PC-9 (cell line): ENCODE measurements at regions of chr9 and their contacts with region 1.

Region 1: DNA sequence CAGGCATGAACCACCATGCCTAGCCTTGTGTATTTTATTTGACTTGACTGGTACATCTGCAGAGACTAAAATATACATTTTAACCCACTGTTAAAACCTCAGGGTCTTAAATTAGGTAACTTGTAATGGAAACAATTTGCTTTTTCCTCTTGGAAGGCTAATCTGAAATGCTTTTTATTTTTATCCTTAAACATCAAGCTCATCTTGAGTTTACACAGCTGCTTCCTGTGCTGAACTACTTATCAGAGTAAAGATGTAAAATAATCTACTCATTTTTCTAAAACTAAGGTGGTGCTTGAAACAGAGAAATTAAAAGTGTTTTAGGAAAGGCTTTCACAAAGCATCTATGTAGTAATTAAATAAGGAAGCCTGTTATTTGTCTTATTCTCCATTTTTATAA is 144.1 kb downstream of the ENTREP1 start:
- DNase-seq: no peak
- H3K4me3 ChIP-seq: no peak overlapping the region
- H3K27ac ChIP-seq: no peak overlapping the region
- H3K4me1 ChIP-seq: no peaks in the 10 kb centered on the region; the same call in 1 of the 2 replicates
- H3K27me3 ChIP-seq: no peaks in the 10 kb centered on the region
- CTCF ChIP-seq: no peak

Region 2: DNA sequence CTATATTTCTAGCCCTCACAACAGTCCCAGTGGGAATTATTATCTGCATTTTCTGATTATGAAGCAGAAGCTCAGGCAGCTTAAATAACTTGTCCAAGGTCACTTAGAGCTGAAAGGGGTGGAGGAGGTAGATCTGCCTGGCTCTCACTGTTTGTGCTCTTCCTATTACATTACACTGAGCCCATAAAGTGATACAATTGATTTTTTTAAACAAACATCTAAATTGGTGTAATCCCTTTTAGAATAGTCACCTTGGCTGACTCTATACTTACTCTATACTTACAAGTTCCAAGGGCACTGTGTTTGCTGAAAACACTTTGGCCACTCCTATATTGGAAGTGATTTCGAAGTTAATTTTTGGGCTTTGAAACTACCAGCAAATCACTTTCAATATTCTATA is 58.3 kb after region 1 on chr9:
- CTCF ChIA-PET with region 1: no interaction called
- POLR2A ChIA-PET with region 1: no interaction called
- intact Hi-C with region 1: no loop called
- DNase-seq: no peak
- H3K4me3 ChIP-seq: no peak overlapping the region
- H3K27ac ChIP-seq: no peak overlapping the region
- H3K4me1 ChIP-seq: no peaks in the 10 kb centered on the region
- H3K27me3 ChIP-seq: no peaks in the 10 kb centered on the region
- CTCF ChIP-seq: no peak

Region 3: DNA sequence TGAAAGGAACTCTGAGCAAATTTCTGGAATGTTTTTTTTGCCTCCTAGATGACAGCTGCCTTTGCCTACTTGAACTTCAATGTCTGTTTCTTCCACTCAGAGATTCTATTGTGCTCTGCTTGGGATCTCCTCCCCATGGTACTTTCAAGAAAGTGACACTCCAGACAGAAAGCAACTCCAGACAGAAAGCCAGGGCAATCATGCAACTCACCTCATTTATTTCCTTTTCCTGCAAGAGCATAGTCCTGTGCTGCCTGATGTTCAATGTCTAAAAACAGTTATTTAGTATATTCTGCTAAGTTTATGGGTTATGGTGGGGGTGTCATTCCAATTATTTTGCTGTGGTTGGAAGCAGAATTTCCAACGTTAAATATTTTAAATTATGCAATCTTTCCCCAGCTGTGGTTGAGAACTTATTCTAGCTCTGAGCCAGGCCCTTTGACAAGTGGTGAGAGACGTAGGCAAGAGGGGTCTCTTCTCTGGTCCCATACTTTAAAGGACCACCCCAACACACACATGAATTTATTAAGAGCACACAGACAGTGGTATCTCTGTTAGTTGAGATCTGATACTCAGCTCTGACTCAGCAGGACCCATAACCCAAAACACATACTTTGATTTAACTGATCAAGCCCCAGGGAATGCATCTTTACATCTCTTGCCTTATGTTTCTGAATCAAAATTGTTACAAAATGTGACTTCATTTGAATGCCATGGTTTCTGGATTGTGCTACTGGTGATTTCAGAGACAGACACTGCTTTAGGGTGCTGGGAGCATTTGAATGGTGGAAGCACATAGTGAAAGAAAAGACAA is 535.0 kb after region 1 on chr9:
- CTCF ChIA-PET with region 1: no interaction called
- POLR2A ChIA-PET with region 1: interaction called, 15 read pairs
- intact Hi-C with region 1: no loop called
- DNase-seq: no peak
- H3K4me3 ChIP-seq: no peak overlapping the region
- H3K27ac ChIP-seq: no peak overlapping the region
- H3K4me1 ChIP-seq: no peaks in the 10 kb centered on the region
- H3K27me3 ChIP-seq: no peaks in the 10 kb centered on the region
- CTCF ChIP-seq: no peak